ENCODE measurements at regions of chr4 and their contacts with region 1.

Region 1: DNA sequence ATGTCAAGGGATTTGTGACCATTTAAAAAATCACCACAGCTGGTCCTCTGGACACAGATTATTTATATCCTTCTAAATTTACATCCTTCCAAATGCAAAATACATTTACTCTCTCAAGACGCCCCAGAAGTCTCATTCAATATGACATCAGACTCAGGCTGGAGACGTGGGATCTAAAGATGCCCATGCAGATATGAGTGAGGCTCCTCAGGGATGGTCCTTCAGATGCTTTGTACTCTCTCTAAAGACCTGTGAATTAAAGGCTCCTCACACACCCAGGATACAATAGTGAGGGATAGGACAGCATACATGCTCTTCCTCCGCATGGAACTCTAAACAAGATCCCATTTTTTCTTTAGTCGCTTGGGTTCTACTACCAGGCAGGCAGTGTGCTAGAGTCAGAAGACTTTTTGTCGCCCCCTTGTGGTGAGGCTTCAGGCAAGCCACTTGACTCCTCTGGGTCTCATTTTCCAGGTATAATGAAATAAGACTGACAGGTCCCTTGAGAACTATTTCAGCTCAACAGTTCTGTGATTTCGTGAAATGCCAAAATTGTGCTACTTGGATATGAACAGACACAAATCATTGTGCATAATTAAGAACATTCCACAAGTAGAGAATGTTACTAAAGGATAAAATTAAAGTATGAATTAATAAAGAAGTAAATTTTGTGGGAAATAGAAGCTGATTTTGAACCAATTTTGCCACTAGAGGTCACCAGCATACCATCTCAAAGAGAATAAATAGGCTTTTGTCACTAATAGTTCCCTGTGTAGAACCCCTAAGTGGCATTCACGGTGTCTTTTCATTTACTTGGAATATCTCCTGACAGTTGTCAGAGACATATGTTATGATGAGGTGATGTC is 13.7 kb upstream of the SCOC start:
- DNase-seq: peak; percentile 86
- H3K4me3 Mint-ChIP-seq: no peak overlapping the region
- H3K27ac Mint-ChIP-seq: no peak overlapping the region
- H3K4me1 Mint-ChIP-seq: no peaks in the 10 kb centered on the region
- H3K27me3 Mint-ChIP-seq: peaks cover 4% of the 10 kb centered on the region

Region 2: DNA sequence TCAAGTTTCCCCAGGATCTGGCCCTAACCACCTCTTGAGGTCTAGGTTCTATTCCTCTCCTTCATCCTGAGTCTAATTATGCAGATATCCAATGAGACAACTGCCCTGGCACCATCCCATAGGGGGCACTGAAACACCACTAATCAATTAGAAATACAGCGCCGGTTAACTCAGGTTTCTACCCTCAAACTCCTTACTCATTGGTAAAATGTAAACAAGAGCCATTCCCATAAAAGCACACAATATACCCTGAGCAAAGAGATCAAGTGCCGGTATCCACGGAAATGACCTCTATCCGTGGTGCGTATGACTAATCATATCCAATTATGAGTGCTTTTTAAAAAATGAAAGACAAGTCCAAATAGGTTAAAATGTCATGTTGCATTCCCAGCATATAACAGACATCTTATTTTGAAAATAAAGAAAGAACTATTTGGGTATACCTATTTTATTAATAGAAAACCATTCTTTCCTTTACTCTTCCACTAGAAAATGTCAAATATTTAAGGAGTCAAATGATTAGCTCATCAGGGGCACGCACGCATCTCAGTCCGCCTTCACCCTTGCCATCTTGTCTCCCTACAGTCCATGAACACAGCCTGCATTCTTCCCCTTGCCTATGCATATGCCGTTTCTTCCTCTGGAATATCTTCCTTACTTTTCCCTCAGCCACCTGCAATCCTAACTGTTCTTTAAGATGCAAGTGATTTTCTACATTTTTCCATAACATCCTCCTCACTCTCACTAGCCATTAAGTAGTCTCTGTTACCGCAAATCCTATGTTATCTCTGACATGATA is 346.9 kb before region 1 on chr4:
- CTCF ChIA-PET with region 1: interaction called, 33 read pairs
- DNase-seq: peak; percentile 73
- H3K4me3 Mint-ChIP-seq: no peak overlapping the region
- H3K27ac Mint-ChIP-seq: no peak overlapping the region
- H3K4me1 Mint-ChIP-seq: peaks cover 6% of the 10 kb centered on the region
- H3K27me3 Mint-ChIP-seq: peaks cover 9% of the 10 kb centered on the region

Region 3: GRCh38 chr4:140158365-140159030 is 201.3 kb before region 1 on chr4:
- CTCF ChIA-PET with region 1: no interaction called
- DNase-seq: no peak
- H3K4me3 Mint-ChIP-seq: no peak overlapping the region
- H3K27ac Mint-ChIP-seq: no peak overlapping the region
- H3K4me1 Mint-ChIP-seq: peaks cover 26% of the 10 kb centered on the region
- H3K27me3 Mint-ChIP-seq: peaks cover 46% of the 10 kb centered on the region

Region 4: DNA sequence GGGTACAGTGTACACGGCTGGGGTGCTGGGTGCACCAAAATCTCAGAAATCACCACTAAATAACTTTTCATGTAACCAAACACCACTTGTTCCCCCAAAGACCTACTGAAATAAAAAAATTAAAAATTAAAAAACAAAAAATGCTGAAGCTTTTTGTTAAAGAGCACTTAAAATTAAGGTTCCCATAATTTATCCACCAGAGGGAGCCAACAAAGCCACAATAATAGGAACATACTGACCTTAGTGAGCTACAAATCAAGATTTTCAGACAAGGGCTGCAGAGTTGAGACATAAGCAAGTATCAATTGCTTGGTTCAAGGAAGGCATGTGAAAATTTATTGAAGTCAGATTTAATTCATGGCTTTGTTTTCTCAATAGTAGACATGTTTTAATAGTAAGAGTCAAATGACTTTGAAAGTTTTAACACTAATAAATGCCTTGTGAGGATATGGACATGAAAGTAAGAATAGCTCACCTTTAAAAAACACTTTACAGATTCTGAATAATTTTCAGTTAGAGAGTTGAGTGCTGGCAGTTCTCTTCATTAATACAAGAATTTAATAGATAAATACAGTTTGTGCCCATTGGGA is 29.4 kb before region 1 on chr4:
- CTCF ChIA-PET with region 1: interaction called, 17 read pairs
- DNase-seq: no peak
- H3K4me3 Mint-ChIP-seq: no peak overlapping the region
- H3K27ac Mint-ChIP-seq: no peak overlapping the region
- H3K4me1 Mint-ChIP-seq: peaks cover 5% of the 10 kb centered on the region
- H3K27me3 Mint-ChIP-seq: no peaks in the 10 kb centered on the region

Region 5: DNA sequence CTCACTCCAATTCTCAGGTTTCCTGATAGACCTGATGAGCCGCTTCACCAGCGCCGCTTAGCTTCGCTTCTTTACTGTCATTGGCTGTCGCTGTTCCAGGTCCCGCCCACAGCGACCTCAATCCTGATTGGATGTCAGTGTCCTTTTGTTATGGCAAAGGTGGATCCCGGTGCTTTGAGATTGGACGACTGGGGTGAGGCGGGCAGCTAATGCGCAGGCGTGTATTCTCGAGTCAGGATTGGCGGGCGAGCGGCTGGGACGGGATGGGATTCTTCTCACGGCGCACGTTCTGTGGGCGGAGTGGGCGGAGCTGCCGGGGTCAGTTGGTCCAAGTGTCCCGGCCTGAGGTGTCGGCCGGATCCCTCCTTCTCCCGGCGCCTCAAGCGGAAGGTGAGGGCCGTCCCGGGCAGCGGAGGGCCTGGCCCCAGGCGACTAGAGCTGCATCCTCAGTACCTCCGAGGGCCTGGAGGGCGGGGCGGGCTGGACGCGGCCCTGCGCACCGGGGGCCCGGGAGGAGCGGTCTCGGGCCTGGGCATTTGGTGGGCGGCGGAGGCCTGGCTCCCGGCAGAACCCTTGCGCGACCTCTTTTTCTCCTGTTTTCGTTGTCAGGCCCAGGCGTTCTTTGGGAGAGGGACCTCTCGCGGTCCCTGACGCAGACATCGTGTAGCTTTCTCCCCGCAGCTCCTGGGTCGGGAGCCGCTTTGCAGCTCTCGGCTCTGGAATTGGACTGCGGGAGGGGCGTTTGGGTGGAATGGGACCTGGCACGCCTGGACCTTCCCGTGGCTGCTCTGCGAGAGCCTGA is 13.7 kb after region 1 on chr4 and contains the start of gene SCOC:
- CTCF ChIA-PET with region 1: interaction called, 39 read pairs
- DNase-seq: peak; percentile 99
- H3K4me3 Mint-ChIP-seq: no peak within 1 kb of the TSS
- H3K27ac Mint-ChIP-seq: peak within 1 kb of the TSS; percentile 31
- H3K4me1 Mint-ChIP-seq: peaks cover 25% of the 10 kb centered on the region
- H3K27me3 Mint-ChIP-seq: no peaks in the 10 kb centered on the region

Region 6: GRCh38 chr4:140609548-140610425 is 250.0 kb after region 1 on chr4:
- CTCF ChIA-PET with region 1: interaction called, 29 read pairs
- DNase-seq: no peak
- H3K4me3 Mint-ChIP-seq: no peak overlapping the region
- H3K27ac Mint-ChIP-seq: no peak overlapping the region
- H3K4me1 Mint-ChIP-seq: no peaks in the 10 kb centered on the region
- H3K27me3 Mint-ChIP-seq: peaks cover 6% of the 10 kb centered on the region

Region 7: GRCh38 chr4:140637836-140638235 is 278.0 kb after region 1 on chr4:
- CTCF ChIA-PET with region 1: interaction called, 13 read pairs
- DNase-seq: peak; percentile 51
- H3K4me3 Mint-ChIP-seq: no peak overlapping the region
- H3K27ac Mint-ChIP-seq: no peak overlapping the region
- H3K4me1 Mint-ChIP-seq: no peaks in the 10 kb centered on the region
- H3K27me3 Mint-ChIP-seq: peaks cover 15% of the 10 kb centered on the region